PC-9 (cell line): ENCODE measurements at regions of chr12 and their contacts with region 1.

Region 1: GRCh38 chr12:16939871-16940306 is 333.9 kb upstream of the LMO3 start:
- DNase-seq: peak; percentile 65 to 73
- H3K4me3 ChIP-seq: no peak overlapping the region
- H3K27ac ChIP-seq: no peak overlapping the region
- H3K4me1 ChIP-seq: no peaks in the 10 kb centered on the region
- H3K27me3 ChIP-seq: no peaks in the 10 kb centered on the region
- CTCF ChIP-seq: peak; percentile 91

Region 2: DNA sequence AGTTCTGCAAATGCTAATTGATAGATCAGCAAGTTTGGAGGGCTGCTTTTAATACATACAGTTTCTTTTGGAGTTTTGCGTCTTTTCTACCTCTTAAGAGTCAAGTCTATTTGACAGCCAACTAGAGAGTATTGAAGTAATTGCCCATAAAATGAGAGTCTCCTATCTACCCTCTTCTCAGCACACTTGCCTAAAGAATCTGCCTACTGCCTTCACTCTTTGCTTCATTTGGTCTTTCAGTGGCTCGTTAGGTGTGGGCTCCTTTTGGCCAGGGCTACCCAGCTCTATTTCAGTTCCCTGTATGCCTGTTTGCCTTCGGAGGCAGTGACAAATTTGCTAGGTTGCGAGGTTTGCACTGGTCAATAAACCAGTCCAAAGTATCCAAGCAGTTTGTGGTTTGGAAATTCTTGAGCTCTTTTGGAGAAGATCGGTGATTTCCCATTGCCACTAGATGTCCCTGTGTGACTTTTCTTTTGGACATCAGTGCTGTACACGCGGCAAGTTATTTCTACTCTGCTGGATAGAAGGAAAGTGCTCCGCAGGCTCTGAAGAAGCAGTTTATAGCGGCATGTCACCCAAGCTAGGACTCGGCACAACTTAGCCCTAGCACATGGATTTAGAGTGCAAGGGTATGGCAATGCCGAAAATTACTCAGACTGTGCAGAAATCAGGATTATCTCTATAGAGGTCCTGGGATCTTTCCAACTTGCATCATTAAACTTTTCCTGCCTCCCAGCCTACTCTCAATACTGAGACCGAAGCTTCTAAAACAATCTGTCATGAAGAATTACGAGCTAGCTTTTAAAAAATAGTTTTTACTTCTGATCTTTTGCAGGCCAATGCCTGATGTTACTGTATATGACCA is 553.9 kb before region 1 on chr12:
- CTCF ChIA-PET with region 1: no interaction called
- POLR2A ChIA-PET with region 1: no interaction called
- intact Hi-C with region 1: loop called (anchors 10 kb)
- DNase-seq: no peak
- H3K4me3 ChIP-seq: no peak overlapping the region
- H3K27ac ChIP-seq: no peak overlapping the region
- H3K4me1 ChIP-seq: peaks cover 14% of the 10 kb centered on the region; the same call in 1 of the 2 replicates
- H3K27me3 ChIP-seq: no peaks in the 10 kb centered on the region
- CTCF ChIP-seq: peak; percentile 56; the same call in 1 of the 2 replicates

Region 3: DNA sequence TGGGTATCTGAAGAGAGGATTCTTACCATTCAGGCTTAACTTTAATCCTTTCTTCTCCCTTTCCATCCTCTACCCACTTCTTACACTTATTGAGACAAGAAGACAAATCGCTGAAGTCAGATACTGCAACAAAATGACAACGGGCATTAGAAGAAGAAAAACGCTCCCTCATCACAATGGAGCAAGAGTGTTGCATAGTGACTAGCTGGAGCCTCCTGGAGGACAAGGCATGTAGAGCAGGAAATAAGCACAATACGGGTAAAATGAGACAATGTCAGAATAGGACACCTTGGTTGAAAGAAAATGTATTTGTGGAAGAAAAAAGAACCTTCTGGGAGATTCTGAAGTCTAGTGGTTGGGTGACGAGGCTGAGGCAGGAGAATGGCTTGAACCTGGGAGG is 649.1 kb after region 1 on chr12:
- CTCF ChIA-PET with region 1: no interaction called
- POLR2A ChIA-PET with region 1: no interaction called
- intact Hi-C with region 1: loop called (anchors 1 kb)
- DNase-seq: peak in 1 of 2 experiments; percentile 17
- H3K4me3 ChIP-seq: no peak overlapping the region
- H3K27ac ChIP-seq: no peak overlapping the region
- H3K4me1 ChIP-seq: no peaks in the 10 kb centered on the region
- H3K27me3 ChIP-seq: no peaks in the 10 kb centered on the region
- CTCF ChIP-seq: peak; percentile 55

Region 4: DNA sequence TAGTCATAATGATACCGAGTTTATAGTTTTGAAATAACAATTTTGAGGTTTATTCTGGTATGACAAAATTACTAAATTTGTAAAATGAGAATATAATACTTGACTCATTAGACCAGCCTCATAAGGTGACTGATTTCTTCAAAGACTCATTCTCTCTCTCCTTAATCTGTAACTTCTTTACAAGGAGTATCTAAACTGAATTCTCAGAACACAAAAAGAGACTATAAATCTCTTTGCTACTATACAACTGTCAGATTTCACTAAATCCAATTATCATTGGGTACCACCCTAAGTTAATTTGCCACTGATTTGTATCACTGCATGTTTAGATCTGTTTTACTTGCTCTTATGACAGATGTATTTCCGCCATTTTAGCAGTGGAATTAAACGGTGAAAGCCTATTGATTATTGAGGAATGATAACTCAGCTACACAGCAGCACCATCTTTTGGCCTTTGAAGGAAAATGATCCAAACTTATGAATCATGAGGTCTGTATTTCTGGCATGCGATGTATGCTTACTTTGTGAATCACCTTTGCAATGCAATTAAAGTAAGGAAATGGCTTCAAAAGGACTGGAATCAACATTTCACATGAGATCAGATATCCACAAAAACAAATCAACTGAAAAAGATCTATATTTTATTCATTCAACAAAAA is 988.9 kb after region 1 on chr12:
- CTCF ChIA-PET with region 1: no interaction called
- POLR2A ChIA-PET with region 1: no interaction called
- intact Hi-C with region 1: loop called (anchors 1 kb)
- DNase-seq: peak; percentile 13 to 79
- H3K4me3 ChIP-seq: no peak overlapping the region
- H3K27ac ChIP-seq: no peak overlapping the region
- H3K4me1 ChIP-seq: peaks cover 3% of the 10 kb centered on the region
- H3K27me3 ChIP-seq: no peaks in the 10 kb centered on the region
- CTCF ChIP-seq: peak; percentile 61; the same call in 1 of the 2 replicates